Panc1 (cell line): ENCODE measurements at regions of chr6 and their contacts with region 1.

Region 1: GRCh38 chr6:167815296-167816006 is 11.3 kb upstream of the AFDN start:
- DNase-seq: no peak
- ATAC-seq: no peak
- H3K4me3 ChIP-seq: no peak overlapping the region
- H3K27ac ChIP-seq: no peak overlapping the region
- H3K4me1 ChIP-seq: no peaks in the 10 kb centered on the region
- H3K27me3 ChIP-seq: no peaks in the 10 kb centered on the region; the same call in 1 of the 2 replicates
- CTCF ChIP-seq: no peak

Region 2: DNA sequence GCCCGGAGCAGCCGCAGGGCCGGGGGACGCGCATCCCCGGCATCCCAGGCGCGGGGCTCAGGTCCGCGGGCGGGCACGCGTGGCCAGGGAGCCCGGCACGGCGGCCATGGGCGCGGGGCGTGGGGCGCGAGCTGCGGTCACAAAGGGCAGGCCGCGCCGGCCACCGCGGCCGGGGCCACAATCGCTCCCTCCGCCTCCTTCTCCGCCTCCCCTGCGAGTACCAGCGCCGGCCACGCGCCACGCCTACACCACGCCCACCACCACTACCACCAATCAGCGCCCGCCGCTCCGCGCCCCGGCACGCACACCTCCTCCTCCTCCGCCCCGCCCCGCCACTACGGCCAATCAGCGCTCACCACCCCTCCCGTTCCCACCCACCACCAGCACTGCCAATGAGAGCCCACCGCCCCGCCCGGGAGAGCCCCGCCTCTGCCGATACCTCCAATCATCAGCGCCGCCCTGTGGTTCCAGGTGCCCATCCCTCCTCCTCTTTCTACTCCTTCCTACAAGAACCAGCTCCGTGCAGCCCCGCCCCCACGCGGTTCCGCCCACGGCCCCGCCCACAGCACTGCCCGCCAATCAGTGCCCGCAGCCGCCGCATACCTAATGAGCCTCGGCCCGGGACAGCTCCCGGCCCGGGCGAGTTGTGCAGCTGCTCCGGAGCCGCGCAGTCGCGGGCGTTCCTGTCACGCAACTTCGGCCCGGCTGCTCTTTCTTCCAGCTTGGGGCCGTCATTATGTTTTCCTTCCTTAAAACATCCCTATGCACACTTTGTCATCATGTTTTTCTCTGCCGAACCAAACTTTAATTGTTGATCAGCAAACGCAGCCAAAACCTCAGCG is 1188.2 kb before region 1 on chr6 and contains the start of gene RPS6KA2:
- CTCF ChIA-PET with region 1: no interaction called
- POLR2A ChIA-PET with region 1: no interaction called
- in situ Hi-C with region 1: no loop called
- intact Hi-C with region 1: loop called (anchors 10 kb)
- DNase-seq: peak; percentile 92
- ATAC-seq: peak; percentile 96
- H3K4me3 ChIP-seq: peak within 1 kb of the TSS; percentile 68 to 85
- H3K27ac ChIP-seq: peak within 1 kb of the TSS; percentile 1; the same call in 1 of the 2 replicates
- H3K4me1 ChIP-seq: peaks cover 12% of the 10 kb centered on the region
- H3K27me3 ChIP-seq: peaks cover 45% of the 10 kb centered on the region
- CTCF ChIP-seq: no peak
- total RNA-seq, gene RPS6KA2: 4.1 TPM

Region 3: GRCh38 chr6:167996424-167997199 is 181.2 kb after region 1 on chr6:
- CTCF ChIA-PET with region 1: no interaction called
- POLR2A ChIA-PET with region 1: no interaction called
- in situ Hi-C with region 1: no loop called
- intact Hi-C with region 1: no loop called
- DNase-seq: no peak
- ATAC-seq: 0 out of 2 replicates have a peak, but pooled peaks have one; percentile 47
- H3K4me3 ChIP-seq: peak overlapping the region in 1 of 2 experiments; percentile 24; a peak in 1 of 4 replicates
- H3K27ac ChIP-seq: 0 out of 2 replicates have a peak overlapping the region, but pooled peaks have one; percentile 1
- H3K4me1 ChIP-seq: peaks cover 22% of the 10 kb centered on the region
- H3K27me3 ChIP-seq: no peaks in the 10 kb centered on the region
- CTCF ChIP-seq: no peak

Region 4: DNA sequence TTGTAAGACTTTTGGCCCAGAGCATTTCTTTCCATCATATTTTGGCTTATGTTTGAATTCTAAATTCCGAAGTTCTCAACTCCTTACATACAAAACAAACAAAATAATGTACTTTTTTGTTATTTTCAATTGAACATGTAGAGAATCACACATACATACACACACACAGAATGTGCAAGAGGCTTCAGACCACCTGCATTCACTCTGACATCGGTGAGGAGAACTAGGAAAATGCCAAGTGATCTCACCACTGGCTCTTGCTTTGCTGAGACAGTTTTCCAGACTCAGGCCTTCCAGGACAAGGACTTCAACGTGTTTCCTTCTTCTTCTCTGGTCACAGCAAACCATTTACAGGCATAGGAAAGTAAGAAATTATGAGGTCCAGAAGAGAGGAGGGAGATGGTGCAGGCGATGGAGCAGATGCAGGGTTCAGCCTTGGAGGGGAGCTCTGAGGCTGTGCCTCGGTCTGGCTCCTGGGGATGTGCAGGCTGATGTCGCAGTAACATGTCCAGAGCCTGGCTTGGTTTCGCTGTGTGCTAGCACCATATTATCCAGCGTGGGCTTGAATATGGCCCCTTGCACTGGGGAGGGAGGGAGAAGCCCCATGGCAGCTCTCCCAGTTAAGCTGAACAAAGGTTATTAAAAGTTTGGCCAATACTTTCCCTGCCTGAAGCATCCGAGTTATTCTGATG is 410.8 kb after region 1 on chr6:
- CTCF ChIA-PET with region 1: no interaction called
- POLR2A ChIA-PET with region 1: no interaction called
- in situ Hi-C with region 1: no loop called
- intact Hi-C with region 1: no loop called
- DNase-seq: no peak
- ATAC-seq: no peak
- H3K4me3 ChIP-seq: no peak overlapping the region
- H3K27ac ChIP-seq: no peak overlapping the region
- H3K4me1 ChIP-seq: no peaks in the 10 kb centered on the region
- H3K27me3 ChIP-seq: 0 out of 2 replicates have a peak, but pooled peaks cover 2% of the 10 kb centered on the region
- CTCF ChIP-seq: no peak

Region 5: DNA sequence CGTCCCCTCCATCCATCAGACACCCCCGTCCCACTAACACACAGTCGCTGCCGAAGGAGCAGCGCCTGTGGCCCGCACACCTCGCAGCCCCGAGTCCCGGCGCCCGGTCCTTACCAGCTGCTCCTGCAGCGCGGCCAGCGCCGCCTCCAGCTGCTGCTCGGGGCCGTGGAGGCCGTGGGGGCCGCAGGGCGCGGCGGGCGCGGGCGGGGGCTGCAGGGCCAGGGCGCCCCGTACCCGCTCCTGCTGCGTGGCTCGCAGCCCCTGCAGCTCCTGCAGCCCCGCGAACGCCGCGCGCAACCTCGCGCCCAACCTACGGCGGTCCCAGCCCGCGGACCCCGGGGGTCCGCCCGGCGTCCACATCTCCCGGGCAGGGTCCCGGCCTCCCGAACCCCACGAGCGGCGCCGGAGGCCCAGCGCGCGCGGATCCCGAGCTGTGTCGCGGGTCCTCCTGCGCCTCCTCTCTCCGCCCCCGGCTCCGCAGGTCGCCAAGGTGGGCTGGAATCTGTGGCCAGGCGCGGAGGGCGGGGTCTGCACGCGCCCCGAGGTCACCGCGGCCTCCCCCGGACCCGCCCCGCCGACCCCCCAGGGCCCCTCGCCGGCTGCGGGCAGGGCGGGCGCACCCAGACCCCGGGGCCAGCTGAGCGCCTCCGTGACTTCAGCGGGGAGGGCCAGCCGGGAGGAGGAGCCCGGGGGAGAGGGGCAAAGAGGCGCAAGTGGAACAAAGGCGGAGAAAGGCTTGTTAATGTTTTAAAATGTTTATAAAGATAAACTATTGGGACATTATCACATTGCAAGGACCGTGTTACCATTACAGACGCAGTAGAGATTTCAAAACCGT is 504.0 kb after region 1 on chr6 and contains the start of gene DACT2:
- CTCF ChIA-PET with region 1: interaction called, 10 read pairs
- POLR2A ChIA-PET with region 1: no interaction called
- in situ Hi-C with region 1: no loop called
- intact Hi-C with region 1: no loop called
- DNase-seq: no peak
- ATAC-seq: peak; percentile 77
- H3K4me3 ChIP-seq: peak within 1 kb of the TSS; percentile 37 to 52
- H3K27ac ChIP-seq: no peak within 1 kb of the TSS
- H3K4me1 ChIP-seq: 0 out of 2 replicates have a peak, but pooled peaks cover 5% of the 10 kb centered on the region
- H3K27me3 ChIP-seq: peaks cover 8% of the 10 kb centered on the region
- CTCF ChIP-seq: no peak
- total RNA-seq, gene DACT2: 3.3 TPM